PC-9 (cell line): ENCODE measurements at regions of chr11 and their contacts with region 1.

Region 1: DNA sequence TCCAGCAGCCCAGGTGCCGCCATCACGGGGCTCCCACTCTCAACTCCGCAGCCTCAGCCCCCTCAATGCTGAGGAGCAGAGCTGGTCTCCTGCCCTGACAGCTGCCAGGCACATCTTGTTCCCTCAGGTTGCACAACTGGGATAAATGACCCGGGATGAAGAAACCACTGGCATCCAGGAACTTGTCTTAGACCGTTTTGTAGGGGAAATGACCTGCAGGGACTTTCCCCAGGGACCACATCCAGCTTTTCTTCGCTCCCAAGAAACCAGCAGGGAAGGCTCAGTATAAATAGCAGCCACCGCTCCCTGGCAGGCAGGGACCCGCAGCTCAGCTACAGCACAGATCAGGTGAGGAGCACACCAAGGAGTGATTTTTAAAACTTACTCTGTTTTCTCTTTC is at the start of gene SAA1:
- DNase-seq: no peak
- H3K4me3 ChIP-seq: no peak within 1 kb of the TSS
- H3K27ac ChIP-seq: no peak within 1 kb of the TSS
- H3K4me1 ChIP-seq: peaks cover 14% of the 10 kb centered on the region
- H3K27me3 ChIP-seq: no peaks in the 10 kb centered on the region
- CTCF ChIP-seq: no peak
- total RNA-seq, gene SAA1: 1.9 TPM in 1 of 2 replicates, not detected in the other

Region 2: GRCh38 chr11:18151581-18151980 is 114.4 kb before region 1 on chr11:
- CTCF ChIA-PET with region 1: no interaction called
- POLR2A ChIA-PET with region 1: no interaction called
- intact Hi-C with region 1: no loop called
- DNase-seq: no peak
- H3K4me3 ChIP-seq: no peak overlapping the region
- H3K27ac ChIP-seq: no peak overlapping the region
- H3K4me1 ChIP-seq: no peaks in the 10 kb centered on the region
- H3K27me3 ChIP-seq: peaks cover 70% of the 10 kb centered on the region
- CTCF ChIP-seq: no peak

Region 3: GRCh38 chr11:18243783-18244362 is 22.1 kb before region 1 on chr11:
- CTCF ChIA-PET with region 1: no interaction called
- POLR2A ChIA-PET with region 1: no interaction called
- intact Hi-C with region 1: loop called (anchors 2 kb)
- DNase-seq: peak; percentile 57 to 66
- H3K4me3 ChIP-seq: no peak overlapping the region
- H3K27ac ChIP-seq: no peak overlapping the region
- H3K4me1 ChIP-seq: peaks cover 6% of the 10 kb centered on the region; the same call in 1 of the 2 replicates
- H3K27me3 ChIP-seq: no peaks in the 10 kb centered on the region
- CTCF ChIP-seq: peak; percentile 97